H1 (cell line): ENCODE measurements at regions of chr11 and their contacts with region 1.

Region 1: DNA sequence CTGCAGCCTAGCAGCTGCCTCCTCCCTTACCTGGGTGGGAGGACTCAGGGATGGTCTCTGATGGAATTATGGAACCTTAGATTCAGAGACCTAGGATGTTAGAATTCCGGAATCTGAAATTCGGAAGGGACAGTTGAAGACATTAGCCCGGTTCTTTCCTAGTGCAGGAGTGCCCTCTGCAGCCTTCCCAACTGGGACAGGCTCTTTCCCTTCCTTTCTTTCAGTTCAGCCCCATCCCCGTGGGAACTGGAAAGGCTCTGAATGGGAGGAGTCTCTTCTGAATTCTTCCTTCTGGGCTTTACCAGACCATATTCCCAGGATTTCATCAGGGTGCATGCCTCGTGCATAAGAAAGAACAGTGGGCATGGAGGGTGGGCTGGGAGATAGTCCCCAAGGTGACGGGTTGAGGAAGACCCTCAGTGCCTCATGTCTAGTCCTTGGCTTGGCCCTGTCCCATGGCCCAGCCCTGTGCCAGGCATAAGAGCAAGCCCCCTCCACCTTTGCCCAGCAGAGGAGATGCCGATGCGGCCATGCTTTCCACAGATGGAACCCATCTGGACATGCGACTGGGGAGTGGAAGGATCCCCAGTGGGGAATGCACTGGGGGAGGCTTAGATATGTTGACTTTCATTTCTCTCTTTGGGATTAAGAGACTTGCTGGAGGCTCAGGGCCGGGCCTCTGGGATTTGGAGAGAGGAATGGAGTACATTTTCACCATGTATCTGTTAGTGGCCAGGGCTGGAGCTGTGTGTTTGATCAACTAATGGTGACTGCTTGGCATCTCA is 14.4 kb downstream of the DNAJB13 start:
- DNase-seq: no peak
- H3K4me3 ChIP-seq: no peak overlapping the region
- H3K27ac ChIP-seq: no peak overlapping the region
- H3K4me1 ChIP-seq: no peaks in the 10 kb centered on the region
- H3K27me3 ChIP-seq: no peaks in the 10 kb centered on the region; a peak in 1 of 7 replicates
- CTCF ChIP-seq: no peak
- EP300 ChIP-seq: no peak
- POLR2A ChIP-seq: no peak
- RAD21 ChIP-seq: no peak; a peak in 1 of 4 replicates

Region 2: GRCh38 chr11:73671701-73672100 is 293.6 kb before region 1 on chr11:
- CTCF ChIA-PET with region 1: no interaction called
- POLR2A ChIA-PET with region 1: no interaction called
- DNase-seq: no peak
- H3K4me3 ChIP-seq: no peak overlapping the region
- H3K27ac ChIP-seq: no peak overlapping the region
- H3K4me1 ChIP-seq: no peaks in the 10 kb centered on the region
- H3K27me3 ChIP-seq: no peaks in the 10 kb centered on the region
- CTCF ChIP-seq: no peak
- EP300 ChIP-seq: no peak
- POLR2A ChIP-seq: no peak
- RAD21 ChIP-seq: no peak

Region 3: DNA sequence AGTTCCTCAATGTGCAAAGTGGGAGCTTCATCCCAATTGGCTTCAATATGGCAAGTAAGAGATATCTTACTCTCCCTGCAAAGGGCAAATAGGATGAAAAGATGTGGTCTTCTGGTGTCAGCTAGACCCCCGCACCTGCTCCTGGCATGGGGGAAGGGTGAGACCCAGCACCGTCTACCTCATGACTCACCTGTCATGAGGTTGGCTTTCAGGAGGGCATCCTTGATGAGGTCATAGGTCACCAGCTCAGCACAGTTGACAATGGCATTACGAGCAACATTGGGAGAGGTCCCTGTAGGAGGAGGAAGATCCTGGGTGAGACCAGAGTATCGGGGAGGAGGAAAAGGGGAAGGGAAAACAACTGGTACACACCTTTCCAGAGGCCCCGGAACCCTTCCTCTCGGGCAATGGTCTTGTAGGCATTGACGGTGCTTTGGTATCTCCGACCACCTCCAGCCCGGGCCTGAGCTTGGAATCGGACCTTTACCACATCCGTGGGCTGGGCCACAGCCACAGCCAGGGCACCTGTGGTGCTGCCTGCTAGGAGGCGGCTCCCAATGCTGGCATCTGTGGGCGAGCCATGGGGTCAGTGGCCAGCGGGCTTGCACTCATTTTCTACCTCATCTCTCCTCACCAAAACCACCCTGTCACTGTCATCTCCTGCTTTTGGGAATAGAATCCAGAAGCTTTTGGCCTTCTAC is 11.3 kb after region 1 on chr11:
- CTCF ChIA-PET with region 1: interaction called, 22 read pairs
- POLR2A ChIA-PET with region 1: interaction called, 94 read pairs
- DNase-seq: no peak
- H3K4me3 ChIP-seq: no peak overlapping the region
- H3K27ac ChIP-seq: no peak overlapping the region
- H3K4me1 ChIP-seq: peaks cover 6 to 11% (median 8%) of the 10 kb centered on the region in 4 experiments; a peak in 6 of 7 replicates
- H3K27me3 ChIP-seq: no peaks in the 10 kb centered on the region
- CTCF ChIP-seq: no peak
- EP300 ChIP-seq: no peak
- POLR2A ChIP-seq: no peak
- RAD21 ChIP-seq: no peak